ENCODE measurements at regions of chr19 and their contacts with region 1.

Region 1: GRCh38 chr19:41844601-41845000 is at the start of gene LYPD4:
- DNase-seq: no peak
- H3K4me3 ChIP-seq: no peak within 1 kb of the TSS
- H3K27ac ChIP-seq: no peak within 1 kb of the TSS
- H3K4me1 ChIP-seq: no peaks in the 10 kb centered on the region
- H3K27me3 ChIP-seq: peaks cover 14% of the 10 kb centered on the region
- CTCF ChIP-seq: no peak
- total RNA-seq, gene LYPD4: not detected in 2 replicates

Region 2: GRCh38 chr19:40721936-40722661 is 1122.5 kb before region 1 on chr19:
- CTCF ChIA-PET with region 1: interaction called, 13 read pairs
- POLR2A ChIA-PET with region 1: no interaction called
- intact Hi-C with region 1: no loop called
- DNase-seq: no peak
- H3K4me3 ChIP-seq: no peak overlapping the region
- H3K27ac ChIP-seq: no peak overlapping the region
- H3K4me1 ChIP-seq: peaks cover 27% of the 10 kb centered on the region
- H3K27me3 ChIP-seq: no peaks in the 10 kb centered on the region
- CTCF ChIP-seq: no peak

Region 3: DNA sequence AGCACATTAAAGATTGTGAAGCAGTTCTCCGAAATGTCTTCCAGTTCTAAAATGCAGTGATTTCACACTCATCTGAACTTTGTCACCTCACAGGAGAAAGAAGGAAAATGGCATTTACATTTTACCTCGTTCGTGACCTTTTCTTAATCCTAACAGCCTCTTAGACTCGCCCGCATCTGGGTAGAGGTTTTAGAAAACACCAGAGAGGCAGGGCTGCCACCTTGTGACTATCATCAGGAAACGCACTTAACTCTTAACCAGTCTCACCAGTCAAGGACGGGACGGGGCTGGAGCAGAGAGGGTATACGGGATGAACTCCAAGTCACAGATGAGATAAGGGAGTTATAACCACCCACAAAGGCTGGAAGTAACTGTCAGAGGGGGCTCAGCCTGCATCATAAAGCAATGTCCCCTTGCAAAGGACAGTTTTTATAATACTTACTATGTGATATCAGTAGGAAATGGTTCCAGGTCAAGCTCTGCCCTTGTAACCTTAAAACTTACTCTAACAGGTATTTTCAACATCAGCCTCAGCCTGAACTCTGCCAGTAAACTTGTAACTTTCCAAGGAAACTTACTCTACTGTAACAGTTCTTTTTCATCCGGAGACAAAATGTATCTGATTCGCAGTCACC is 97.9 kb before region 1 on chr19:
- CTCF ChIA-PET with region 1: no interaction called
- POLR2A ChIA-PET with region 1: no interaction called
- intact Hi-C with region 1: no loop called
- DNase-seq: peak; percentile 57 to 75
- H3K4me3 ChIP-seq: no peak overlapping the region
- H3K27ac ChIP-seq: 0 out of 2 replicates have a peak overlapping the region, but pooled peaks have one; percentile 7
- H3K4me1 ChIP-seq: peaks cover 64% of the 10 kb centered on the region
- H3K27me3 ChIP-seq: no peaks in the 10 kb centered on the region
- CTCF ChIP-seq: peak; percentile 83

Region 4: DNA sequence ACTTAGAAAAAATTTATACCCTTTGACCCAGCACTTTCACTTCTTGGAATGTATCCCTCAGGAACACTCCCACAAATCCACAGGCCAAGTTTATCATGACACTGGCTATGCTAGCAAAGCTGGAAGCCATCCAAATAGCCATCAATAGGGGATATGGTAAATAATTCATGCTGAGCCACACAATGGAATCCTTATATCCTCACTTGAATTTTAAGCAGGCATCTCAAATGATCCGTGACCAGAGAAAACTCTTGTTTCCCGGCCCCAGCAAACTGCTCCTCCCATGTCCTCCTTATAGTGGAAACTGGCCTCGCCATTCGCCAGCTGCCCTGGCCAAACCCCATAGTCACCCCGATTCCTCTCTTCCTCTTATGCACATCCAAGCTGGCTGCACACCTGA is 187.8 kb after region 1 on chr19:
- CTCF ChIA-PET with region 1: interaction called, 16 read pairs
- POLR2A ChIA-PET with region 1: interaction called, 3 read pairs
- intact Hi-C with region 1: no loop called
- DNase-seq: peak in 1 of 2 experiments; percentile 39
- H3K4me3 ChIP-seq: no peak overlapping the region
- H3K27ac ChIP-seq: no peak overlapping the region
- H3K4me1 ChIP-seq: no peaks in the 10 kb centered on the region; the same call in 1 of the 2 replicates
- H3K27me3 ChIP-seq: peaks cover 14% of the 10 kb centered on the region; the same call in 1 of the 2 replicates
- CTCF ChIP-seq: no peak

Region 5: DNA sequence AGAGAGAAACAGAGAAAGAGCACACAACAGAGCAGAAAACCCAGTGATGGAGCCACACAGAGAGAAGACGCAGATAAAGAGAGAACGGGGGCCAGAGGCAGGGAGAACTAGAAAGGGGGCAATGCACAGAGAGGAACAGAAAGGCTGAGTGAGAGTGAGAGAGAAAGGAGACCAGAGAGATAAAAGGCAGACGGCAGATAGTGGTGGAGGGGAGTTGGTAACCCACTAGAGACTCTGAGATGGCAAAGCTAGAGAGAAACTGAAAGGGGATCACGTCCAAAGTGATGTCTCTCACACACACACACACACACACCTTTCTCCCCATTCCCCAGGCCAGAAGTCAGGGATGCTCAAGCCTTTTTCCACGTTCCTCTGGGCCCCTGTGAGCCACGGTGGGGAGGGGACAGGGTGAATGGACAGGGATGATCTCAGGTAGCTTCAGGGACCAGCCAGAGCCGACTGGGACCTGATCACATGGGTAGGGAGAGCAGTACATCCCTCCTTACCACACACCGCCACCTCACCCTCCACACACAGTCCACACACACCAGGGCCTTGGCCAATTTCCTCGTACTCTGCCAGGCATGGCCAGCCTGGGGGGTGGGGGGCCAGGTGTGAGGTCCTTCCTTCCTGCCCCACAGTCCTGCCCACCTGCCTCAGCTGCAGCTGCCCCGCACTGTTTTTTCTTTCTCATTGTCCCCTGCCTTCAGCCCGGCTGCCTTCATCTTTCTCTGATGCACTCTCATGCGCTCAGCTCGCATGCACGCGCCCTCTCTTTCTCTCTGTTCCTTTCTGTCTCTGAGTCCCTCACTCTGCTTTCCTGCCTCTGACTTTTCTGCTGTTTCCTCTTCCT is 310.1 kb after region 1 on chr19:
- CTCF ChIA-PET with region 1: no interaction called
- POLR2A ChIA-PET with region 1: interaction called, 11 read pairs
- intact Hi-C with region 1: no loop called
- DNase-seq: no peak
- H3K4me3 ChIP-seq: no peak overlapping the region
- H3K27ac ChIP-seq: no peak overlapping the region
- H3K4me1 ChIP-seq: no peaks in the 10 kb centered on the region
- H3K27me3 ChIP-seq: peaks cover 47% of the 10 kb centered on the region
- CTCF ChIP-seq: no peak

Region 6: GRCh38 chr19:43450545-43450997 is 1606.0 kb after region 1 on chr19:
- CTCF ChIA-PET with region 1: no interaction called
- POLR2A ChIA-PET with region 1: no interaction called
- intact Hi-C with region 1: no loop called
- DNase-seq: no peak
- H3K4me3 ChIP-seq: no peak overlapping the region
- H3K27ac ChIP-seq: no peak overlapping the region
- H3K4me1 ChIP-seq: peaks cover 18% of the 10 kb centered on the region
- H3K27me3 ChIP-seq: no peaks in the 10 kb centered on the region
- CTCF ChIP-seq: no peak

Measured in PC-9 (cell line).